T-cell (primary cell): ENCODE measurements at regions of chr16 and their contacts with region 1.

Region 1: GRCh38 chr16:53054670-53055485 is at the start of gene CHD9:
- DNase-seq: peak; percentile 39 to 87 (median 64)
- ATAC-seq: peak; percentile 93 to 95 (median 94)
- H3K4me3 ChIP-seq: peak within 1 kb of the TSS; percentile 88 to 89
- H3K4me3 Mint-ChIP-seq: peak within 1 kb of the TSS; percentile 79 to 88 (median 85)
- H3K27ac ChIP-seq: peak within 1 kb of the TSS; percentile 57
- H3K27ac Mint-ChIP-seq: peak within 1 kb of the TSS; percentile 64 to 65
- H3K4me1 ChIP-seq: peaks cover 5 to 26% of the 10 kb centered on the region in 2 experiments
- H3K4me1 Mint-ChIP-seq: peaks cover 14 to 25% (median 22%) of the 10 kb centered on the region in 3 donors
- H3K27me3 ChIP-seq: peaks cover 0 to 14% of the 10 kb centered on the region in 2 experiments
- H3K27me3 Mint-ChIP-seq: peaks cover 0 to 5% of the 10 kb centered on the region in 2 donors
- total RNA-seq, gene CHD9: 33.0 to 39.3 (median 33.8) TPM

Region 2: GRCh38 chr16:53123747-53124146 is 68.9 kb after region 1 on chr16:
- CTCF ChIA-PET with region 1: no interaction called
- POLR2A ChIA-PET with region 1: no interaction called
- DNase-seq: no peak
- ATAC-seq: no peak
- H3K4me3 ChIP-seq: no peak overlapping the region
- H3K4me3 Mint-ChIP-seq: no peak overlapping the region
- H3K27ac ChIP-seq: no peak overlapping the region
- H3K27ac Mint-ChIP-seq: no peak overlapping the region
- H3K4me1 ChIP-seq: no peaks in the 10 kb centered on the region
- H3K4me1 Mint-ChIP-seq: peaks cover 0 to 7% (median 0%) of the 10 kb centered on the region in 3 donors
- H3K27me3 ChIP-seq: no peaks in the 10 kb centered on the region
- H3K27me3 Mint-ChIP-seq: no peaks in the 10 kb centered on the region

Region 3: GRCh38 chr16:53282975-53283946 is 228.4 kb after region 1 on chr16:
- CTCF ChIA-PET with region 1: interaction called in 1 of 2 experiments, 13 read pairs
- POLR2A ChIA-PET with region 1: no interaction called
- DNase-seq: peak in 1 of 35 experiments; percentile 48
- ATAC-seq: no peak
- H3K4me3 ChIP-seq: no peak overlapping the region
- H3K4me3 Mint-ChIP-seq: no peak overlapping the region
- H3K27ac ChIP-seq: no peak overlapping the region
- H3K27ac Mint-ChIP-seq: no peak overlapping the region
- H3K4me1 ChIP-seq: peaks cover 0 to 5% of the 10 kb centered on the region in 2 experiments
- H3K4me1 Mint-ChIP-seq: no peaks in the 10 kb centered on the region
- H3K27me3 ChIP-seq: no peaks in the 10 kb centered on the region
- H3K27me3 Mint-ChIP-seq: no peaks in the 10 kb centered on the region